AG04450 (cell line): ENCODE measurements at regions of chr20 and their contacts with region 1.

Region 1: DNA sequence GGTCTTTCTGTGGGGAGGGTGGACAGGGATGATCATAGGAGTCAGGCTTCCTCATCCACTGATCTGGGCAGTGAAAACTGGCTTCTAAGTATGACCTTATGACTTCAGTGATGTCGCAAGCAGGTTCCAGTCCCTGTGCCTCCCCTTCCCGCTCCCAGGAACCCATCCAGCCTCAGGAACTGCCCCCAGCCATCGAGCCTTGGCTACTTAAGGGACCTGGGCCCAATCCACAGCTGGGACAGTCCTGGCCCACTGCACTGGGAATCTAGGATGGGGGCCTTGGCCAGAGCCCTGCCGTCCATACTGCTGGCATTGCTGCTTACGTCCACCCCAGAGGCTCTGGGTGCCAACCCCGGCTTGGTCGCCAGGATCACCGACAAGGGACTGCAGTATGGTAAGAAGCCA is at the start of gene LBP:
- DNase-seq: no peak
- H3K4me3 ChIP-seq: no peak within 1 kb of the TSS
- H3K27ac ChIP-seq: no peak within 1 kb of the TSS
- H3K27me3 ChIP-seq: peaks cover 19% of the 10 kb centered on the region
- CTCF ChIP-seq: no peak
- polyA plus RNA-seq, gene LBP: not detected in 2 replicates

Region 2: GRCh38 chr20:38144974-38145728 is 201.1 kb before region 1 on chr20:
- CTCF ChIA-PET with region 1: no interaction called
- POLR2A ChIA-PET with region 1: interaction called, 11 read pairs
- DNase-seq: no peak
- H3K4me3 ChIP-seq: no peak overlapping the region
- H3K27ac ChIP-seq: peak overlapping the region; percentile 91
- H3K27me3 ChIP-seq: no peaks in the 10 kb centered on the region
- CTCF ChIP-seq: no peak

Region 3: GRCh38 chr20:38434743-38435554 is 88.7 kb after region 1 on chr20 and contains the start of gene SNHG17:
- CTCF ChIA-PET with region 1: no interaction called
- POLR2A ChIA-PET with region 1: no interaction called
- DNase-seq: peak; percentile 91
- H3K4me3 ChIP-seq: peak within 1 kb of the TSS; percentile 95
- H3K27ac ChIP-seq: peak within 1 kb of the TSS; percentile 61
- H3K27me3 ChIP-seq: no peaks in the 10 kb centered on the region
- CTCF ChIP-seq: peak; percentile 100
- polyA plus RNA-seq, gene SNHG17: 14.4 and 18.5 TPM in 2 replicates